ENCODE measurements at regions of chr13 and their contacts with region 1.

Region 1: DNA sequence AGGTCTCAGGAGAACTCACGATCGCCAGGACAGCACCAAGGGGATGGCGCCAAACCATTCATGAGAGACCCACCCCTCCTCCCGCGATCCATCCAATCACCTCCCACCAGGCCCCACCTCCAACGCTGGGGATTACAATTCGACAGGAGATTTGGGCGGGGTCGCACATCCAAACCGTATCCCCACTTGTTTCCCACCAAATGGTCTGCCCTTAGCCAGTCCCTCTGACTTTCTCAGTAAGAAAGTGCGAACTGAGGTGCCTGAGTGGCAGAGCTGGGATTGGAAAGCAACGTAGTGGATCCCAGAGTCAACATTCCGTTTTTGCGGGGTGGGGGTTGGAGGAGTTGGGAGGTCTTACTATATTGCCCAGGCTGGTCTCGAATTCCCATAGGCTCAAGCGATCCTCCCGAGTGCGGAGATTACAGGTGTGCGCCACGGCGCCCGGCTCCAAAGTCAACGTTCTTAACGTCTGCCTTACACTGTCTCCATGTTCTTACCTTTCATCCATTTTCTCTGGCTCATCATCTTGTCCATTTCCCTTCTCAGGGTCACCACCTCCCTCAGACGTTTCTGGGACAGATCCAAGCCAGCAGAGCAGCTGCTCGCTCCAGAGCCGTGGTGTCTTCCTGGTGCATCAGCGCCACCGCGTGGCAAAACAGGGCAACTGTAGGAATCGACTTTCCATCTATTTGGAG is 102.7 kb upstream of the ABCC4 start:
- DNase-seq: peak; percentile 55
- H3K4me3 ChIP-seq: peak overlapping the region; percentile 57
- H3K27ac ChIP-seq: no peak overlapping the region
- H3K27me3 ChIP-seq: no peaks in the 10 kb centered on the region
- CTCF ChIP-seq: peak; percentile 93

Region 2: DNA sequence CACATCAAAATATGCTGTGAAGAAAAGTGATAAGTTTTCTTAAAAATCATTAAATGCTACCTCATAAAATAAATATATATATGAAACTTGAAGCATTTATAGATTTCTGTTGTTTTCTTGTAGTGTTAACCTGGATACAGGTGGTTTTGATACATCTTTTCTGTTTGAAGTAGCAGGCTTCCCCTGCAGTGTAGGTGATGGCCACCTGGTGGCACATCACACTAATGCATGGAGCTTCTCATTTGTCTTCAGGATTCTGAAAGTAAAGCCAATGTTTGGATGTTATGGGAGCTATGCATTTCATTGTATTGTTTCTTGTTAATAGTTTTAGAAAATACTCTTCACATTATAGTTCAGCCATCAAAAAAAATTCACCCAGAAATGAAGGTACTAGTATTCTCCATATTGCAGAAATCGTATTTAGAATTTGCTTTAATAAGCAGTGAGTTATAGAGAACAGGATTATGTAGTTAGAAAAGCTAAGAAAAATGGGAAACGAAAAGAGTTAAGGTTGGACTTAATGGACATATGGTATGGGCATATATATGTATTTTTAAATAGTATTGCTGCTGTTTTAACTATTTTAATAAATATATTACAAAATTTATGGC is 783.6 kb before region 1 on chr13:
- CTCF ChIA-PET with region 1: interaction called, 13 read pairs
- POLR2A ChIA-PET with region 1: no interaction called
- DNase-seq: no peak
- H3K4me3 ChIP-seq: no peak overlapping the region
- H3K27ac ChIP-seq: no peak overlapping the region
- H3K27me3 ChIP-seq: no peaks in the 10 kb centered on the region
- CTCF ChIP-seq: peak; percentile 85

Region 3: GRCh38 chr13:94988654-94989053 is 415.3 kb before region 1 on chr13:
- CTCF ChIA-PET with region 1: interaction called, 11 read pairs
- POLR2A ChIA-PET with region 1: no interaction called
- DNase-seq: no peak
- H3K4me3 ChIP-seq: no peak overlapping the region
- H3K27ac ChIP-seq: no peak overlapping the region
- H3K27me3 ChIP-seq: peaks cover 6% of the 10 kb centered on the region
- CTCF ChIP-seq: no peak

Region 4: DNA sequence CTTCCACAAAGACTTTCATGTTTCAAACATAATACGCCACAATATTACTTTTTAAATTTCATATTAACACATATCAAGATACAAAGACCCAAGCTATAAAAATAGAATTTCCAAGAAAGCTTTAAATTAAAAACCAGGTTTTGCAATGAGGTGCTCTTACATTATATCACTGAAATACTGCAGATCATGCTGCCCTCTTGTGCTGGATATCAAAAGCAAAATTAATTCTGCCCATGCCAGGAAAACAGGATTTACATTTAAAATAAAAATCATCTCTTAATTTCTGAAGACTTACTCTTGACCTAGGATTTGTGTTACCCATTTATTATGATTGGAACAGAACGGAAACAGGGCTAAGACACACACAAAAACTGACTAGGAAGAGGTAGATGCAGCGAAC is 247.8 kb before region 1 on chr13:
- CTCF ChIA-PET with region 1: interaction called, 14 read pairs
- POLR2A ChIA-PET with region 1: no interaction called
- DNase-seq: no peak
- H3K4me3 ChIP-seq: no peak overlapping the region
- H3K27ac ChIP-seq: no peak overlapping the region
- H3K27me3 ChIP-seq: no peaks in the 10 kb centered on the region
- CTCF ChIP-seq: 0 out of 2 replicates have a peak, but pooled peaks have one; percentile 15

Region 5: GRCh38 chr13:95301183-95301967 is 102.6 kb before region 1 on chr13 and contains the start of gene ABCC4:
- CTCF ChIA-PET with region 1: interaction called, 10 read pairs
- POLR2A ChIA-PET with region 1: no interaction called
- DNase-seq: peak; percentile 27
- H3K4me3 ChIP-seq: peak within 1 kb of the TSS; percentile 85
- H3K27ac ChIP-seq: peak within 1 kb of the TSS; percentile 73
- H3K27me3 ChIP-seq: no peaks in the 10 kb centered on the region
- CTCF ChIP-seq: no peak
- polyA plus RNA-seq, gene ABCC4: 110 and 140 TPM in 2 replicates

Region 6: DNA sequence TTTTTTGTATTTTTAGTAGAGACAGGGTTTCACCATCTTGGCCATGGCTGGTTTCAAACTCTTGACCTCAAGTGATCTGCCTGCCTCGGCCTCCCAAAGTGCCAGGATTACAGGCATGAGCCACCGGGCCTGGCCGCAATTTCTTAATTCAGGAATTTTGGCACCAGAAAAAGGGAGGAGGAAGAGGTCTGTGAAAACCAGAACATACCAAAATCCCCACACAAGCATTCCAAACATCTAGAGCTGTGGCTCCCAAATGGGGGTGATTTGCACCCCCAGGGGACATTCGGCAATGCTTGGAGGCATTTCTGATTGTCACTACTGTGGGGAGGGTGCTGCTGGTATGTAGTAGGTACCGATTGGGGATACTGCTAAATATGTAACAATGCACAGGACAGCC is 62.5 kb before region 1 on chr13:
- CTCF ChIA-PET with region 1: no interaction called
- POLR2A ChIA-PET with region 1: no interaction called
- DNase-seq: no peak
- H3K4me3 ChIP-seq: no peak overlapping the region
- H3K27ac ChIP-seq: no peak overlapping the region
- H3K27me3 ChIP-seq: no peaks in the 10 kb centered on the region
- CTCF ChIP-seq: no peak

Region 7: DNA sequence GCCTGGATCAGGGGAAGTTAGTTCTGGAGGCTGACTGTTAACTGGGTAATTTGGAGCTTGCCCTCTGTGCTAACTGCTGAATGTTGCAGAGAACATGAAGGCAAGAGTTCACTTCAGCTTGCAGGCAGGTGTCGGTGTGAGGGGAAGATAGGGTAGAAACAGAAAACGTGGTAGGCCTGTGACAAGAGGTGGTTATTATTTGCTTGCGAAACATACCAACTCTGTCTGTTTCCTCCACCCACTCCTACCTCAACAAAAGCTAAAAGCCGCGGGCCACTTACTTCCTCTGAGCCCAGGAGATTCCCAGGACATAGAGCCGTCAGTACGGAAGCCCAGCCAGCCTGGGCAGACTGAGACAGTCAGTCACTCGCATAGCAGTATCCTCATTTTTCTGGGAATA is 16.5 kb after region 1 on chr13:
- CTCF ChIA-PET with region 1: interaction called, 19 read pairs
- POLR2A ChIA-PET with region 1: no interaction called
- DNase-seq: no peak
- H3K4me3 ChIP-seq: no peak overlapping the region
- H3K27ac ChIP-seq: no peak overlapping the region
- H3K27me3 ChIP-seq: peaks cover 5% of the 10 kb centered on the region
- CTCF ChIP-seq: no peak